K562 (cell line): ENCODE measurements at regions of chr18 and their contacts with region 1.

Region 1: DNA sequence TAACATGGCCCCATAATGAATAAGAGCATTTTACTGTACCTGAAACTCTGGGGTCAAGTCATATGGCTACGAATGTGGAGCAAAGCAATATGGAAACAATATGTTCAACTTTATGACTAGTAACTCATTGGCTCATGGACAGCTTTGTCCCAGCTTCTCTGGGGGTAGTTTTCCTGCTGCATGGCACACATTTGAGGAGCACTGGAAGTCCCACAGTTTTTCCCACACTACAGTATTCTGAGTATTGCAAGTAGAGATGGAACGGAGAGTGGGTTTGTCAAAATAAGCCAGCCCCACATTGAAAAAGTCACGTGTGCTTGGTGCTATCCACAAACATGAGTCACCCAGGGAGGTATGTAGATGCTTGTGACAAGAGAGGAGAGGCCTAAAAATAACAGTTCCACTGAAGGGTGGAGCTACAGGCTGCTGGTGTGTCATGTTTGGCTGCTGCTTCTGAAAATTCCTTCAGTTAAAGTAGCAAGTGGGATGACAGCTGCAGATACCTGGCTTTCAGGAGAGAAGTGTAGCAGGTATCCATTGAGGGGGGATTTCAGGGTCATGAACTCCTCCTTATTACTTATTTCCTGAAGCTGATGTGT is 48.2 kb upstream of the CTAGE1 start:
- DNase-seq: peak; percentile 79 to 87 (median 82)
- ATAC-seq: peak; percentile 95
- H3K4me3 ChIP-seq: no peak overlapping the region
- H3K27ac ChIP-seq: peak overlapping the region; percentile 57
- H3K4me1 ChIP-seq: peaks cover 8 to 46% of the 10 kb centered on the region in 2 experiments
- H3K27me3 ChIP-seq: peaks cover 0 to 3% of the 10 kb centered on the region in 2 experiments; a peak in 2 of 5 replicates
- CTCF ChIP-seq: no peak
- EP300 ChIP-seq: peak; percentile 61
- POLR2A ChIP-seq: no peak
- RAD21 ChIP-seq: no peak; a peak in 1 of 4 replicates

Region 2: DNA sequence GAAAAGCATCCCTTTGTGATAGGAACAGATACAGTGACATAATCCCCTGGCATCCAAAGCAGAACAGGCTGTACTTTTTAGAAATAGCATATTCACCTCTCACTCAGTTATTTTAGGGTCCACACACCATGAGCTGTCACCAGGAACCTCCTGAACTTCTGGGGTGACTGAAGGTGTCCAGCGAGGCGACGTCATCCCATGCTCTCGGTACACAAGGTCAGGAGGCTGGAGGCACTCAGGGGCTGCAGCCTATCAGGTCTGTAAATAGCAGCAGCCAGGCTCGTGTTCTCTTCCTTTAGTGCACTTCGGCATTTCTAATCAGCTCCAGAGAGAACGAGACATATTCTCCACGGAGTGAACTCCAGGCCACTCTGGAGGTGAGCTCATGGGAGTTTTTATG is 198.3 kb before region 1 on chr18:
- CTCF ChIA-PET with region 1: no interaction called
- POLR2A ChIA-PET with region 1: no interaction called
- in situ Hi-C with region 1: no loop called
- intact Hi-C with region 1: no loop called
- DNase-seq: no peak
- ATAC-seq: no peak
- H3K4me3 ChIP-seq: no peak overlapping the region
- H3K27ac ChIP-seq: no peak overlapping the region
- H3K4me1 ChIP-seq: no peaks in the 10 kb centered on the region
- H3K27me3 ChIP-seq: peaks cover 6 to 17% of the 10 kb centered on the region in 2 experiments; a peak in 3 of 5 replicates
- CTCF ChIP-seq: no peak
- EP300 ChIP-seq: no peak
- POLR2A ChIP-seq: no peak
- RAD21 ChIP-seq: no peak

Region 3: GRCh38 chr18:22451796-22452195 is 14.2 kb before region 1 on chr18:
- CTCF ChIA-PET with region 1: no interaction called
- POLR2A ChIA-PET with region 1: interaction called, 16 read pairs
- in situ Hi-C with region 1: no loop called
- intact Hi-C with region 1: no loop called
- DNase-seq: peak in 3 of 4 experiments; percentile 32 to 64 (median 40)
- ATAC-seq: peak; percentile 69
- H3K4me3 ChIP-seq: peak overlapping the region; percentile 16
- H3K27ac ChIP-seq: peak overlapping the region; percentile 86
- H3K4me1 ChIP-seq: peaks cover 6 to 16% of the 10 kb centered on the region in 2 experiments; a peak in 3 of 5 replicates
- H3K27me3 ChIP-seq: peaks cover 0 to 1% of the 10 kb centered on the region in 2 experiments; a peak in 1 of 5 replicates
- CTCF ChIP-seq: peak in 1 of 3 experiments; percentile 23; a peak in 1 of 6 replicates
- EP300 ChIP-seq: no peak
- POLR2A ChIP-seq: no peak
- RAD21 ChIP-seq: peak in 1 of 2 experiments; percentile 25; a peak in 1 of 4 replicates